ENCODE measurements at regions of chr3 and their contacts with region 1.

Region 1: GRCh38 chr3:119930286-119930685 is 148.4 kb downstream of the NR1I2 start:
- DNase-seq: no peak
- ATAC-seq: no peak
- H3K4me3 ChIP-seq: no peak overlapping the region
- H3K27ac ChIP-seq: no peak overlapping the region
- H3K4me1 ChIP-seq: peaks cover 0 to 15% (median 4%) of the 10 kb centered on the region in 9 donors
- H3K27me3 ChIP-seq: no peaks in the 10 kb centered on the region
- CTCF ChIP-seq: no peak

Region 2: GRCh38 chr3:119588112-119588511 is 342.2 kb before region 1 on chr3:
- intact Hi-C with region 1: loop called in 1 of 10 experiments (anchors 5 kb)
- DNase-seq: peak; percentile 45 to 53
- ATAC-seq: peak in 6 of 8 donors; percentile 49 to 78 (median 68)
- H3K4me3 ChIP-seq: no peak overlapping the region
- H3K27ac ChIP-seq: peak overlapping the region in 5 of 10 donors; percentile 35 to 83 (median 51)
- H3K4me1 ChIP-seq: peaks cover 0 to 46% (median 0%) of the 10 kb centered on the region in 9 donors
- H3K27me3 ChIP-seq: no peaks in the 10 kb centered on the region
- CTCF ChIP-seq: no peak

Measured in heart right ventricle (tissue), 16 donors.